Left cardiac atrium (tissue), 4 donors: ENCODE measurements at regions of chr18 and their contacts with region 1.

Region 1: GRCh38 chr18:62183578-62184195 is 3.2 kb downstream of the PIGN start:
- DNase-seq: no peak
- ATAC-seq: no peak

Region 2: DNA sequence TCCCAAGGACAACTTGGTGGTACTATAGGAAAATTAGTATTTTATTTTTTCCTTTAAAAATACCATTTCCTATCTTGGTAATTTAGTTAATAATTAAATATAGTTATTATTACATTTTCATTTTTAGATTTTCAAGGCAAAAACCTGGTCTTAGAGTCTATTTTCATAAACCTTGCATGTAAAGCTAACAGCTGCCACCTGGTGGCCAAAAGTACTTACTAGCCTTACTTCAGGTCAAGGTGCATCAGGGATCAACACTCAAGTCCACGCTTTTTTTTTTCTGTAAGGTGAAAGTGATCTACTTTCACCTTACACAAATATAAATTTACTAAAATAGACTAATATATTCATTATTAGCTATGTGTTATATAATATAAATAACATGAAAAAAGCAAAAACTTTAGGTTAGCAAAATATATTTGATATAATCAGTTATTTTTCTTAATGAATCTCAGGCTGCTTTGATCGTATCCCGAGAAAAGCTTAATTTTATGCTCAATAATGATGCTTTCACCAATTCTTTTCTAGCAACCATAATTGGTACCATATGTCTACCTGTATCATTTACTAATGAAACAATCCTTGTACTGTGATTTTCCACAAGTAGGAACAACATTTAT is 65.9 kb after region 1 on chr18:
- intact Hi-C with region 1: loop called (anchors 2 to 5 kb)
- DNase-seq: peak; percentile 79
- ATAC-seq: peak in 1 of 2 donors; percentile 39